Ascending aorta (tissue), 2 donors: ENCODE measurements at regions of chr1 and their contacts with region 1.

Region 1: GRCh38 chr1:167273027-167273800 is 52.5 kb downstream of the POU2F1 start:
- DNase-seq: no peak
- H3K4me3 ChIP-seq: no peak overlapping the region
- H3K27ac ChIP-seq: no peak overlapping the region
- H3K4me1 ChIP-seq: peaks cover 3 to 19% of the 10 kb centered on the region in 2 donors
- H3K27me3 ChIP-seq: no peaks in the 10 kb centered on the region
- CTCF ChIP-seq: no peak

Region 2: DNA sequence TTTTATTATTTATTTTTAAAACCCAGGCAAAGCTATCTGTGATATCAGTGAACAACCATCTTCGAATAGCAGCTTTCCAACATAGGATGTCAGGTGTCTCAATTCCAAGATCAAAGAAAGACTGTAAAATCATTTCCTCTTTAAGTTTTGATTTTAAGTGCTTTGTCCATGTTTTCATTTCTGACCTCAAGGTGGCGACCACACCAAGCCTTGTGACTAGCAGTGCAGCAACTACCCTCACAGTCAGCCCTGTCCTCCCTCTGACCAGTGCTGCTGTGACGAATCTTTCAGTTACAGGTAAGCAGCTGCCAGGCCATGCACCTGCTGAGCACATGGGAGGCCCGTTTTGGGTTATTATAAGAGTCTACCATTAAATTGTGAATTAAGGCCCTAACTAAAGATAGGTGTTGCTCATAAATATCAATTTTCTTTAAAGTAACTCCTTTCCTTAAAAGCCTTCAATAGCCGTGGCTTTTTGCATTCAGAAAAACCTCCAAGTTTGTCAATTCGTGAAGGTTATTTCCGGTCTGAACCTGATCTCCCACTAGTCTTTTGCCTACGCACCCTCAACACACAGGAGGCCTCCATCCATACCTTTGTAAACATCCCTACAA is 128.2 kb after region 1 on chr1:
- intact Hi-C with region 1: loop called (anchors 10 kb)
- DNase-seq: no peak
- H3K4me3 ChIP-seq: no peak overlapping the region
- H3K27ac ChIP-seq: no peak overlapping the region
- H3K4me1 ChIP-seq: no peaks in the 10 kb centered on the region
- H3K27me3 ChIP-seq: no peaks in the 10 kb centered on the region
- CTCF ChIP-seq: peak in 2 of 3 experiments; percentile 31 to 38